Lower leg skin (tissue), 4 donors: ENCODE measurements at regions of chr5 and their contacts with region 1.

Region 1: GRCh38 chr5:126755593-126755992 is 21.3 kb upstream of the LMNB1 start:
- DNase-seq: no peak
- H3K4me3 ChIP-seq: no peak overlapping the region
- CTCF ChIP-seq: no peak
- POLR2A ChIP-seq: no peak

Region 2: GRCh38 chr5:126686451-126687126 is 69.0 kb before region 1 on chr5:
- intact Hi-C with region 1: loop called (anchors 2 kb)
- DNase-seq: no peak
- H3K4me3 ChIP-seq: no peak overlapping the region
- CTCF ChIP-seq: no peak
- POLR2A ChIP-seq: no peak